H1 (cell line): ENCODE measurements at regions of chrX and their contacts with region 1.

Region 1: DNA sequence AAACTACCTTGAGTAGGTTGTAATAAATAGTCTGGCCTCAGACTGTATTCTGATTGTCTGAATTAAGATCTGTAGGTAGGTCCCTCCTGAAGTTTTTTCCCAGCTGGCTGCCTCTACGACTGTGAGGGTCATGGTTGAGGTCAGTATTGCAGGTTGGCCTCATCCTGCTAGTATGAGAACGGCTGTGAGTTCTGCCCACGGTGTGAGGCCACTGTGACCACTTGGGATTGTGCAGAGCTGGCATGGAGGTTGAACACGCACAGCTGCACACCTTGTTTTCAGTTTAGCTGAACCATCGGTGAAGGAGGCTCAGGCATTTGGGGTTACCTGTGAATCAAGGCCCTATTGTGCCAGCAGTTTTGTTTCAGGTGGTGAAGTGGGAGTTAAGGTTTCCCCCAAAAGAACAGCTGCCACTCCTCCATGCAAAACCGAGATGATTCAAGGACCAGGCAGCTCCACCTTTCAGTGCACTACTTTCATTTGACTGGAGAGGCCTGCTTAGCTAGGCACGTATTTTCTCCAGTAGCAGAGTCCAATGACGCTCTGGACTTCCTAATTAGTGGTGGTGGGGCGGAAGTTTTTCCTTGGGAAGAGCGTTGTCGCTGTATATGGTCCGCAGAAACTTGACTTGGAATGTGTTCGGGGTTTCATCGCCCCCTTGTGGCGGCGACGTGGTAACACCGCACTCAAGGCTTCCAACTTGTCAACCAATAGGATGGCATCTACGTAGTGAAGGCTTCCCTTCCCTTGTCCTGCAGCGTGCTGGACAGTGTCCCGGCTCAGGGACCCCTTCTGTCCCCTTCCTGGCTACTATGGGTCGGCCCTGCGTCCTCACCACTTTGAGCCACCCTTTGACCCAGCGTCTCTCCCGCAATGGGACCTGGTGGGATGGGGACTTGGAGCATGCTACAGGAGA is 13.8 kb downstream of the CMC4 start:
- DNase-seq: peak; percentile 63 to 65
- H3K4me3 ChIP-seq: peak overlapping the region in 1 of 4 experiments; percentile 46; a peak in 1 of 8 replicates
- H3K27ac ChIP-seq: no peak overlapping the region
- H3K4me1 ChIP-seq: no peaks in the 10 kb centered on the region
- H3K27me3 ChIP-seq: no peaks in the 10 kb centered on the region
- CTCF ChIP-seq: peak; percentile 62 to 80 (median 68)
- EP300 ChIP-seq: no peak
- POLR2A ChIP-seq: no peak
- RAD21 ChIP-seq: peak; percentile 57 to 58

Region 2: GRCh38 chrX:154980330-154981096 is 76.6 kb before region 1 on chrX:
- CTCF ChIA-PET with region 1: interaction called, 30 read pairs
- POLR2A ChIA-PET with region 1: no interaction called
- DNase-seq: peak; percentile 5 to 75
- H3K4me3 ChIP-seq: 0 out of 8 replicates have a peak overlapping the region, but pooled peaks of 1 of the 4 experiments have one; percentile 17
- H3K27ac ChIP-seq: no peak overlapping the region
- H3K4me1 ChIP-seq: no peaks in the 10 kb centered on the region
- H3K27me3 ChIP-seq: no peaks in the 10 kb centered on the region
- CTCF ChIP-seq: peak; percentile 24 to 84 (median 64)
- EP300 ChIP-seq: no peak
- POLR2A ChIP-seq: no peak
- RAD21 ChIP-seq: peak; percentile 87 to 89

Region 3: DNA sequence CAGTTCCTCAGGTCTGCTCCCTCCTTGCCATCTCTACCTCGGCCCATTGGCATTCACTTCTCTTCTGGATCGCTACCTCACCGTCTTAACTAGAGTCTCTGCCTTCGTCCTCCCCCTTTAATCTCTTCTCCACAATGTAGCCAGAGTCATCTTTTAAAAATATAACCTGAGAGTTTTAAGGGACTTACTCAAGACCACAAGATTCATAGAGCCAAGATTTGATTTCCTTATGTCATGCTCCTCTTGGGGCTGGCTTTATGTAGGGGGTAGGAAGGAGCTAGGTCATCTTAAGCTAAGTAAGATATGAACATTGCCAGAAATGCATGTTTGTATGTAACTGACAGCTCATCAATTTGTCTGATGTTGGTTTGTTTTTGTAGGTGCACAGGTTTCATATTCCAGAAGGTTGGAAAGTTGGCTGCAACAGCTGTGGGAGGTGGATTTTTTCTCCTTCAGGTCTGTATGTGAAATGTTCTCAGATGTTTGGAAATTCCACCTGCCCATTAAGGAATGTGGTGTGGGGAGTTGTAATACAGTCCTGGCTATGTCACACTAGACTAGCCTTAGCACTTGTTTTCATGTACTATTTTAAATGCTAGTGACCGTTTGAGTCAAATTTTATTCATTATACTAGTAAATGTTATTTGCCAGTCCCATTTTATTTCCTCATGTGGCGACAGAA is 10.9 kb before region 1 on chrX:
- CTCF ChIA-PET with region 1: interaction called, 15 read pairs
- POLR2A ChIA-PET with region 1: no interaction called
- DNase-seq: no peak
- H3K4me3 ChIP-seq: no peak overlapping the region
- H3K27ac ChIP-seq: no peak overlapping the region
- H3K4me1 ChIP-seq: peaks cover 0 to 7% (median 2%) of the 10 kb centered on the region in 4 experiments; a peak in 2 of 7 replicates
- H3K27me3 ChIP-seq: no peaks in the 10 kb centered on the region
- CTCF ChIP-seq: no peak
- EP300 ChIP-seq: no peak
- POLR2A ChIP-seq: no peak
- RAD21 ChIP-seq: no peak